ENCODE measurements at regions of chr7 and their contacts with region 1.

Region 1: GRCh38 chr7:40799493-40800403 is 664.9 kb downstream of the SUGCT start:
- DNase-seq: no peak
- ATAC-seq: no peak
- H3K4me3 ChIP-seq: no peak overlapping the region
- H3K27ac ChIP-seq: no peak overlapping the region
- H3K4me1 ChIP-seq: no peaks in the 10 kb centered on the region
- H3K27me3 ChIP-seq: no peaks in the 10 kb centered on the region
- CTCF ChIP-seq: no peak

Region 2: DNA sequence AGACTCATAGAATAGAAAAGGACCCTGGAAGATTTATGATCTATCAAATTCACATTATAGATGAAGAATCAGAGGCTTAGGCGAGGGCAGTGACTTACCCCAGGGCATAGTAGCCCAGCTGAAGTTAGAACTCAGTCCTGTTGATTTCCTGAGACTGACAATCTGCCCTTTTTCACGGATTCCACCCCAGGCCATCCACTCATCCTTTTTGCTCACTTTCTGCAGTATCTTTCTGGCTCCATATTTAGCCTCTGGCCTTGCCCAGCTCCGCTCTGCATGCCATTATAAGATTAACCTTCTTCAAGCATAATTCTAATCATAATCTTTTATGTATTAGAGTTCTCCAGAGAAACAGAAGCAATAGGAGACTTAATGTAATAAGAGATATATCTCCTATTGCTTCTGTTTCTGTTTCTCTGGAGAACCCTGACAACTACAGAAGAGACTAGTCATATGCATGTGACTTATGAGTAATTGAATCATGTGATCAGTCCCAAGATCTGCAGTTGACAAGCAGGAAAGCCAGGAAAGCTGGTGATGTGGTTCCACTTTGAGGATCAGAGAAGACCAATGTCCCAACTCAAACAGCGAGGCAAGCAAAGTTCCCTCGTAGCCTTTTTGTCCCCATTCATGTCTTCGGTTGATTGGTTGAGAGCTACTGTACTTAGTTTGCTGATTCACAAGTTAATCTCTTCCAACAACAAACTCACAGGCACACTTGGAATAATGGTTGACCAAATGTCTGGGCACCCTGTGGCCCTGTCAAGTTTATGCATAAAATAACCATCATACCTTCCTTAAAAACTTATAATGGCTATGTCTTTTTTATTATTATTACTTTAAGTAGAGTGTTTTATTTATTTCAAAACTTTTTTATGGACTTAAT is 252.9 kb before region 1 on chr7:
- CTCF ChIA-PET with region 1: no interaction called
- POLR2A ChIA-PET with region 1: no interaction called
- in situ Hi-C with region 1: no loop called
- intact Hi-C with region 1: no loop called
- DNase-seq: no peak
- ATAC-seq: no peak
- H3K4me3 ChIP-seq: no peak overlapping the region
- H3K27ac ChIP-seq: no peak overlapping the region
- H3K4me1 ChIP-seq: no peaks in the 10 kb centered on the region
- H3K27me3 ChIP-seq: no peaks in the 10 kb centered on the region
- CTCF ChIP-seq: no peak

Region 3: GRCh38 chr7:40680657-40681056 is 119.1 kb before region 1 on chr7:
- CTCF ChIA-PET with region 1: interaction called, 10 read pairs
- POLR2A ChIA-PET with region 1: no interaction called
- in situ Hi-C with region 1: no loop called
- intact Hi-C with region 1: no loop called
- DNase-seq: no peak
- ATAC-seq: no peak; the same call in 1 of the 2 replicates
- H3K4me3 ChIP-seq: no peak overlapping the region
- H3K27ac ChIP-seq: no peak overlapping the region
- H3K4me1 ChIP-seq: no peaks in the 10 kb centered on the region
- H3K27me3 ChIP-seq: no peaks in the 10 kb centered on the region
- CTCF ChIP-seq: peak; percentile 49